Caco-2 (cell line): ENCODE measurements at regions of chr17 and their contacts with region 1.

Region 1: DNA sequence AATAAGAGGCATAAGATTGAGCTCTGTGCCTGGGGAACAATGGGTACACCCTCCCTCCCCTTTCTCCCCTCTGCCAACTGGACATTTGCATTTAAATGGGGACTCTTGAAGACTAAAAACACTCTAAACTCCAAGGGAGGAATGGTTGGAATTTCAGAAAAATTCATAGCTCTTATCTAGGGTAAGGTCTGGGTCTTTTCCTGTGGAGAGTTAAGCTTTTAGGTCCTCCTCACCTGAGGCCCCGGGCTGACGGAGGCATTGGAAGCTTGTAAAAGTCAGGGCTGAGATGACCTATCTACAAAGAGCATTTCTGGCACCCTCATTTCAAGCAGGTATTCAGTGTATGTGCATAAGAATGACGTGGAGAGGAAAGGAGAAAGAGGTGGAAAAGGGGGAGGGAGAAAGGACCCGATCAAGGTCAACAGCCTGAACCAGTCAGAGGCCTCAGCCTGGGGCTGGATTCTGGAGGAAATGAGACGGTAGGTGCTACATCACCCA is 78.0 kb downstream of the RAP1GAP2 start:
- DNase-seq: peak; percentile 89 to 92
- H3K4me3 ChIP-seq: no peak overlapping the region
- H3K4me3 Mint-ChIP-seq: peak overlapping the region; percentile 47
- H3K27ac Mint-ChIP-seq: peak overlapping the region; percentile 85
- H3K4me1 ChIP-seq: peaks cover 74% of the 10 kb centered on the region
- H3K4me1 Mint-ChIP-seq: peaks cover 66% of the 10 kb centered on the region
- H3K27me3 ChIP-seq: no peaks in the 10 kb centered on the region
- H3K27me3 Mint-ChIP-seq: no peaks in the 10 kb centered on the region
- CTCF ChIP-seq: no peak

Region 2: GRCh38 chr17:2853111-2853721 is 21.0 kb before region 1 on chr17:
- CTCF ChIA-PET with region 1: interaction called, 8 read pairs
- POLR2A ChIA-PET with region 1: interaction called, 8 read pairs
- intact Hi-C with region 1: loop called (anchors 2 kb)
- DNase-seq: peak in 1 of 2 experiments; percentile 55
- H3K4me3 ChIP-seq: peak overlapping the region; percentile 81
- H3K4me3 Mint-ChIP-seq: peak overlapping the region; percentile 89
- H3K27ac Mint-ChIP-seq: no peak overlapping the region
- H3K4me1 ChIP-seq: peaks cover 30% of the 10 kb centered on the region
- H3K4me1 Mint-ChIP-seq: peaks cover 7% of the 10 kb centered on the region
- H3K27me3 ChIP-seq: no peaks in the 10 kb centered on the region
- H3K27me3 Mint-ChIP-seq: no peaks in the 10 kb centered on the region
- CTCF ChIP-seq: no peak

Region 3: GRCh38 chr17:2892305-2892971 is 18.2 kb after region 1 on chr17:
- CTCF ChIA-PET with region 1: no interaction called
- POLR2A ChIA-PET with region 1: interaction called, 3 read pairs
- intact Hi-C with region 1: loop called (anchors 1 kb)
- DNase-seq: peak in 1 of 2 experiments; percentile 55
- H3K4me3 ChIP-seq: no peak overlapping the region
- H3K4me3 Mint-ChIP-seq: no peak overlapping the region
- H3K27ac Mint-ChIP-seq: peak overlapping the region; percentile 80
- H3K4me1 ChIP-seq: peaks cover 36% of the 10 kb centered on the region
- H3K4me1 Mint-ChIP-seq: peaks cover 39% of the 10 kb centered on the region
- H3K27me3 ChIP-seq: no peaks in the 10 kb centered on the region
- H3K27me3 Mint-ChIP-seq: no peaks in the 10 kb centered on the region
- CTCF ChIP-seq: no peak

Region 4: GRCh38 chr17:2904152-2904551 is 29.9 kb after region 1 on chr17:
- CTCF ChIA-PET with region 1: interaction called, 5 read pairs
- POLR2A ChIA-PET with region 1: no interaction called
- intact Hi-C with region 1: loop called (anchors 2 kb)
- DNase-seq: no peak
- H3K4me3 ChIP-seq: no peak overlapping the region
- H3K4me3 Mint-ChIP-seq: no peak overlapping the region
- H3K27ac Mint-ChIP-seq: no peak overlapping the region
- H3K4me1 ChIP-seq: peaks cover 24% of the 10 kb centered on the region
- H3K4me1 Mint-ChIP-seq: peaks cover 9% of the 10 kb centered on the region
- H3K27me3 ChIP-seq: no peaks in the 10 kb centered on the region
- H3K27me3 Mint-ChIP-seq: no peaks in the 10 kb centered on the region
- CTCF ChIP-seq: no peak